Prostate gland (tissue), 2 donors: ENCODE measurements at regions of chr14 and their contacts with region 1.

Region 1: DNA sequence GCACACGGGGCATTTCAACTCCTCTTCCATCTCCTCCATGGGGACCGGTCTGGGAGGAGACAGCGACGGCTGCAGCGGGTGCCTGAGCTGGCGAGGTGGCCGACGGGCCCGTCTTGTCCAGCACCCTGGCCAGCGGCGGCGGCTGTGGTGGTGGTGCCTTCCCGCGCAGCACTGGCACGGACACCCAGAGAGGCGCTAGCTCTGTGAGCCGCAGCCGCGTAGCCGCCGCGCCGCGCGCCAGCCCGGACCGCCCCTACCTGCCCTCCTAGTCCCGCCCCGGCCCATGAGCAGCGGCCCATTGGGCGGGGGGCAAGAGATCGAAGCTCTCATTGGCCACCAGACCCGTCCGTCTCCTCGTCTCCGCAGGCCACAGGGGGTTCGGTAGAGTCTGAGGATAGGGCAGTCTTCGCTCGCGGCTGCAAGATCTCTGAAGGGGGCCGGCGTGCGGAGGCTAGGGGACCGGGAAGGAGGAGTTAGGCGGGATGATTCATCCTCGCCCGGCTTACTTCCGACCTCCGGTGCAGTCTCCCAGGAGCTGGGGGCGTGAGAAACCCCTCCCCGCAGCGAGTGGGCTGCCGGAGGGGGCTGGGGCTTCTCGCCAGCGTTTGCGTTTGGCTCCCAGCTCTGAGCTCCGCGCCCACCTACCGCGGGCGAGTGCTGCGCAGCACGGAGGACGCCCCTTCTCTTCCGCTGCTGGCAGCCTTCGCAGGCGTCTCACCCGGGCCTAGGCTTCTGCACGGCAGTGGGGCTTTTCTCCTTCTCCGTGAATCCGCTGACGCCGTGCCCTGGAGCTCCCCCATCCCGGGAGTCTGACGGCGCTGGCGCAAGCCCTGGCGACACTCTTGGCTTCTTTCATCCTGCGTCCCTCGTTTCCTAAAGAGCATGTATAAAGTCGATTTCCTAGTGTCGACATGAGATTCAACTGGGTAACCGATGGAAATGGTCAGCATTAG is at the start of gene TRIM9:
- DNase-seq: peak; percentile 95
- H3K4me3 ChIP-seq: peak within 1 kb of the TSS; percentile 43 to 52
- H3K27ac ChIP-seq: peak within 1 kb of the TSS; percentile 9 to 45
- H3K4me1 ChIP-seq: no peaks in the 10 kb centered on the region
- H3K27me3 ChIP-seq: peaks cover 9% of the 10 kb centered on the region
- CTCF ChIP-seq: peak in 1 of 4 experiments; percentile 16
- POLR2A ChIP-seq: peak; percentile 30
- total RNA-seq, gene TRIM9: 0.46 to 6.5 TPM

Region 2: DNA sequence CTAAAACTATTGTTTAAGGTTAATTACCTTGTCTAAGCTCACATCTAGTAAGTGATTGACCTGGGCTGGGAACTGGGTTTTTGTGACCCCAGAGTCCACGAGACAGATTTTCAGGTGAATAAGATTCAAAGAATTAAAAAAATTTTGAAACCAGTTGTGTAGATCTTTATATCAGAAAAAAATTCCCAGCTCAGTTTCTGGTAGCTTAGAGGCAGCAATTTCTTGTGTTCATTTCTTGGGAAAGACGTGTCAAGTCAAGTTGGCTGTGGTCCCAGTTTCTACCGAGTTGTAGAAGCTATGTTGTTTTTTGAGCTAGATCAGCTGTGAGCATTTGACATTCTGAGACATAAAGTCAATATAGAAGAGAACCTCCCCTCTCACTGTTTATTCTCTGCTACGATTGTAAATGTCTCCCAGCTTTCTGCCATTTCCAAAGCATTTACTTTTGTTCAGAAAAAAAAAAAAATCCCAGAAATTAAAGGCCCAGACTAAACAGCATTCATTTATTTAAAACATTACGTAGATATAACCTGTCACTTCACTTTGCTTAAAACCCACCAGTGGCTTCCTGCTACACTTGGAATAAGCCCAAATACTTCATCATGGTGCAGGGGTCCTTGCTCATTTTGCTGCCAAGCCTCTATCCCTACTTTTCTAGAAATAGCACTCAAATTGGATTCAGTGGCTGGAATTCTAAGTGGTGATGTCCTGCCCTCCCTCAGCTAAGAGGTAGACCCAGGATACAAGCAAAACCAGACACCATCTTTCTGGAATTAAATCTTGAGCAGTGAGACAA is 130.4 kb before region 1 on chr14:
- intact Hi-C with region 1: loop called (anchors 10 kb)
- DNase-seq: peak; percentile 67
- H3K4me3 ChIP-seq: no peak overlapping the region
- H3K27ac ChIP-seq: no peak overlapping the region
- H3K4me1 ChIP-seq: no peaks in the 10 kb centered on the region
- H3K27me3 ChIP-seq: no peaks in the 10 kb centered on the region
- CTCF ChIP-seq: no peak
- POLR2A ChIP-seq: no peak

Region 3: GRCh38 chr14:51020024-51020710 is 75.0 kb before region 1 on chr14:
- intact Hi-C with region 1: loop called (anchors 5 kb)
- DNase-seq: no peak
- H3K4me3 ChIP-seq: no peak overlapping the region
- H3K27ac ChIP-seq: no peak overlapping the region
- H3K4me1 ChIP-seq: no peaks in the 10 kb centered on the region
- H3K27me3 ChIP-seq: no peaks in the 10 kb centered on the region
- CTCF ChIP-seq: no peak
- POLR2A ChIP-seq: no peak

Region 4: GRCh38 chr14:51139121-51139681 is 44.0 kb after region 1 on chr14:
- intact Hi-C with region 1: no loop called
- DNase-seq: no peak
- H3K4me3 ChIP-seq: no peak overlapping the region
- H3K27ac ChIP-seq: no peak overlapping the region
- H3K4me1 ChIP-seq: no peaks in the 10 kb centered on the region
- H3K27me3 ChIP-seq: no peaks in the 10 kb centered on the region
- CTCF ChIP-seq: no peak
- POLR2A ChIP-seq: no peak

Region 5: DNA sequence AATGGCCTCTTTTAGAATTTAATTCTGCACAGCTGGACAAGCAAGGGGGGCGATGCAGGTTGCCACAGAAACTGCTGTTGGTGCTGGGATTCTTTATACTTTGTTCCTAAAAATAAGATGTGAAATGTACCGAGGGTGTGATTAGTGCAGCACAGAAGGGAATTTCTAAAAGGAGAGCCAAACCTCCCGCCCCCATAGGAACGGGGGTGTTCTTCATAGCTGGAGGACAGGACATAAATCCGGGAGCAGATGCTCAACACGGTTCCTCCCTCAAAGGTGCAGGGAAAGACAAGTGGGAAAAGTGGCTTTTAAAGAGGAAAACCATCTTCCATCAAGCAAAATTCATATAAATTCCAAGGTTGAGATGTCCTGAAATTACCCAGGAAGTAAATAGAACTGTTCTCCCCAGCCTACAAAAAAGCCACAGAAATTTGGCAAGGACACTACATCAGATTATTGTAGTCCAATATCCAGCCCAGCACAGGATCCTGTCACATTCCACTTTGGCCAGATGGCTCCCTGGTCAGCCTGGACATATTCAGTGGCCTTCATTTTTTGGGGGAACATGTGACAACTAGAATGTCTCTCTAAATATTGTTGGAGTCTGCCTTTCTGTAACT is 93.5 kb after region 1 on chr14:
- intact Hi-C with region 1: no loop called
- DNase-seq: peak; percentile 9
- H3K4me3 ChIP-seq: no peak overlapping the region
- H3K27ac ChIP-seq: no peak overlapping the region
- H3K4me1 ChIP-seq: no peaks in the 10 kb centered on the region
- H3K27me3 ChIP-seq: no peaks in the 10 kb centered on the region
- CTCF ChIP-seq: no peak
- POLR2A ChIP-seq: no peak

Region 6: GRCh38 chr14:51201890-51202289 is 106.7 kb after region 1 on chr14:
- intact Hi-C with region 1: no loop called
- DNase-seq: no peak
- H3K4me3 ChIP-seq: no peak overlapping the region
- H3K27ac ChIP-seq: no peak overlapping the region
- H3K4me1 ChIP-seq: no peaks in the 10 kb centered on the region
- H3K27me3 ChIP-seq: no peaks in the 10 kb centered on the region
- CTCF ChIP-seq: no peak
- POLR2A ChIP-seq: no peak

Region 7: DNA sequence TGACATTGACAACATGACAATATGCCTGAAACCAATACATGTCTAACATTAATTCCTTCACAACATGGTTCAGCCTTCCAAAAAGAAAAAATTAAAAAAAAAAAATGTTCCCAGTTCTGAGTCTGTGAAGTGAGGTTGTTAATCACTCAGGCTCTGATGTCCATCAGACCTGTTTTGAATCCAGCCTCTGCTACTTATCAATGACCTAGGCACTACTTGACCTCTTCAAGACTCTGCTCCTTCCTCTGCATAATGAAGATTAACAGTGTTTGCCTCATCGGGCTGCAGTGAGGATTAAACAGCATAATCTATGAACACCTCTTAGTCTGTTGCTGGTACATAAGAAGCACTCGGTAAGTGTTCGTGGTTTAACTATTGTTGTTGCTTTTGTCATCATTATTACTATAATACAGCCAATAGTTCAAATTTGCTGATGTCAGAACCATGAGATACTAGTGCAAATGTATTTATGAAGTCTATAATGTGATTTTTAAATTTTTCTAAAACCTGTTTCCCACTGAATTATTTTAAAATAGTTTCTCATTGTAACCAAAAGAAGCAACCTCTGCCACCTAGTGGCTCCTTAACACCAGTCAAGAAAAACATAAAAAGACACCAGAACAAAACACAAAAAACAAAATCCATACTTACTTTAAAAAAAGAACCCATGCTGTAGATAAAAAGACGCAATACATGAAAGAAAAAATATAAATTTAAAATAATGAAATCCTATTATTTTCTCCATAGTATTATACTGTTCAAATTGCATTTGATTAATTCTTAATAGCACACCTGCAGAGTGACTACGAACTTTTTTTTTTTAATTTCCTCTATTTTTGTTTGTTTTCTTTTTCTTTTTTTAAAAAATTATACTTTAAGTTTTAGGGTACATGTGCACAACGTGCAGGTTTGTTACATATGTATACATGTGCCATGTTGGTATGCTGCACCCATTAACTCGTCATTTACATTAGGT is 124.6 kb after region 1 on chr14:
- intact Hi-C with region 1: loop called (anchors 10 kb)
- DNase-seq: no peak
- H3K4me3 ChIP-seq: no peak overlapping the region
- H3K27ac ChIP-seq: no peak overlapping the region
- H3K4me1 ChIP-seq: no peaks in the 10 kb centered on the region
- H3K27me3 ChIP-seq: no peaks in the 10 kb centered on the region
- CTCF ChIP-seq: peak in 3 of 4 experiments; percentile 35 to 68 (median 63)
- POLR2A ChIP-seq: no peak